ENCODE measurements at regions of chr3 and their contacts with region 1.

Region 1: DNA sequence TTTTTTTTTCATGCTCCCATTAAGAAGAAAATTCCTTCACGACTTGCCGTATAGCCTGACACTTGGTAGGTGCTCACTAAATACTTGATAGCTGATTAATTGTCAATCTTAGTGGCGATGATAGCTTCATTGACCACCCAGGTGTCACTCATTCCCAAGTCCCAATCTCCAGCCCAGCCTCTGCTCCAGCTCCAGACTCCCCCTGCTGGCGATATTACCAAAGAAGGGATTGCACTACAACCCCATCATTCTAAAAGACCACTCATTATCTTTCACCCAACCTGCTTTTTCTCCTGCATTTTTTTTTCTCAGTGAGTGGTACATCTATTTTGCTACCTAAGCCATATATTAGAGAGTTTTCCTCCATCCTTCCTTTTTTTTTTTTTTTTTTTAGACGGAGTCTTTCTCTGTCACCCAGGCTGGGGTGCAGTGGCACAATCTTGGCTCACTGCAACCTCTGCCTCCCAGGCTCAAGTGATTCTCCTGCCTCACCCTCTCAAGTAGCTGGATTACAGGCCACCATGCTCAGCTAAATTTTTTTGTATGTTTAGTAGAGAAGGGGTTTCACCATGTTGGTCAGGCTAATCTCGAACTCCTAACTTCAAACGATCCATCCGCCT is 19.5 kb upstream of the COMMD2 start:
- DNase-seq: no peak
- H3K4me3 Mint-ChIP-seq: no peak overlapping the region
- H3K27ac Mint-ChIP-seq: no peak overlapping the region
- H3K4me1 Mint-ChIP-seq: no peaks in the 10 kb centered on the region
- H3K27me3 Mint-ChIP-seq: peaks cover 12% of the 10 kb centered on the region

Region 2: DNA sequence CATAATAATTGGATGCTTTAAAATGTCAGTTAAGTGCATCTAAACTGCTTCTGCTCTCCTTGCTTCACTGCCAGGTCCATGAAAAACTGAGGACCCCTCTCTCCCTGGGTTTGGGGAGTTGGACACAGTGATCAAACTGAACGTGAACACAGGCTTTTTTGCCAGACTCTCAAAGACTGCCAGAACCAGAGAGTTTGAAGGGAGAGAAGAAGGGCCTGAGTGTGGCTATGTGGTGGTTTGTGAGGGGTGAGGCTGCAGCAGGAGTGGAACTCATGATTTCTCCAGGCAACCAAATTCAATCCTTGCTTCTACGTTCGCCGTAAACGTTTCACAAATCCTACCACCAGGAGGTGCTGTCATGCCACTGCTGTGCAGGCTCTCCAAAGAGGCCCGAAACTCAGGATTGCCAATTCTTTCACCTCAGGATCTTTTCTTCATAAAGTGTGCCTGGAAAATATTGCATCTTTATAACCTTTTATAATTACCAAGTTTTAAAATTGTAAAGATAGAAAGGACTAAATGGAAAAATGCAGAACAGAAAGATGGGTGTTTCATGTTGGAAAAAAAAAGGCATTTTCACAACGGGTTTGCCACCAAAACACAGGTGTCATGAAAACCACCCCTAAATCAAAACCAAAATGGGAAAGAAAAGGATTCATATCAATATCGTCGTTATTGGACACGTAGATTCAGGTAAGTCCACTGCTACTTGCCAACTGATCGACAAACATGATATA is 277.6 kb before region 1 on chr3:
- intact Hi-C with region 1: loop called (anchors 5 kb)
- DNase-seq: peak; percentile 19
- H3K4me3 Mint-ChIP-seq: no peak overlapping the region
- H3K27ac Mint-ChIP-seq: no peak overlapping the region
- H3K4me1 Mint-ChIP-seq: no peaks in the 10 kb centered on the region
- H3K27me3 Mint-ChIP-seq: peaks cover 22% of the 10 kb centered on the region

Region 3: DNA sequence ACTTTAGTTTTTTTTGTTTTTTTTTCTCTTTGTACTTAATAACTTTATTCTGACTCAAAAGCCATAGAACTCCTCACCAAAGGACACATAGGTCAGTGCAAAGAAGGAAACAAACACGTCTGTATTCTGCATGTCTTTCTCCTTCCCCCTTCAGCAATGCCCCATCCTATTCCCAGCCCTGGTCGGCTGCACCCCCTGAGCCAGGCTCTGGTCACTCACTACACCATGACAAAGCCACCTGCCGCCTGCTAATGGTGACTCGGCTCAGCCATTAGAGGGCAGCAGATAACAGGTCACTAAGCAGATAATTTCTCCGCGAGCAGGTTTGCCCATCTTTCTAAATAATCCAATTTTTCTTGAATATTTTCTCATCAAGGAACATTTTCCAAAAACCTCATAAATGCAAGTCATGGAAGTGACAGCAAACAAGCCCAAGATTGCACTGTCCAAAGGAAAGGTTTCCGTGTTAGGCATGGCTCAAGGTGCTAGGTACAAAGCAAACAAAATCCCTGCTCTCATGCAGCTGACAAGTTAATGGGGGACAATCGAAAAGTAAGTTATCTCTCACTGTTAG is 259.5 kb before region 1 on chr3:
- intact Hi-C with region 1: loop called (anchors 1 kb)
- DNase-seq: no peak
- H3K4me3 Mint-ChIP-seq: no peak overlapping the region
- H3K27ac Mint-ChIP-seq: no peak overlapping the region
- H3K4me1 Mint-ChIP-seq: peaks cover 10% of the 10 kb centered on the region
- H3K27me3 Mint-ChIP-seq: peaks cover 24% of the 10 kb centered on the region

Region 4: GRCh38 chr3:149527531-149528339 is 244.0 kb before region 1 on chr3:
- intact Hi-C with region 1: loop called (anchors 1 kb)
- DNase-seq: no peak
- H3K4me3 Mint-ChIP-seq: no peak overlapping the region
- H3K27ac Mint-ChIP-seq: no peak overlapping the region
- H3K4me1 Mint-ChIP-seq: peaks cover 8% of the 10 kb centered on the region
- H3K27me3 Mint-ChIP-seq: peaks cover 8% of the 10 kb centered on the region

Region 5: GRCh38 chr3:149796026-149796425 is 24.3 kb after region 1 on chr3:
- intact Hi-C with region 1: no loop called
- DNase-seq: no peak
- H3K4me3 Mint-ChIP-seq: no peak overlapping the region
- H3K27ac Mint-ChIP-seq: no peak overlapping the region
- H3K4me1 Mint-ChIP-seq: no peaks in the 10 kb centered on the region
- H3K27me3 Mint-ChIP-seq: peaks cover 12% of the 10 kb centered on the region

Measured in activated T-helper 1 cell treated with anti-CD3 and anti-CD28 coated beads, Interleukin-12 subunit alpha, Interleukin-12 subunit beta, Interleukin-2, Interleukin-4 antibody, amounts not matched to agents 30 ng/mL and 10 ng/mL and 1 ng/mL, durations not matched to agents 14 hours and 24 hours and 36 hours (primary cell).